ENCODE measurements at regions of chr12 and their contacts with region 1.

Region 1: GRCh38 chr12:65209655-65210043 is 40.3 kb downstream of the LEMD3 start:
- DNase-seq: no peak
- H3K4me3 Mint-ChIP-seq: peak overlapping the region; percentile 70
- H3K27ac Mint-ChIP-seq: peak overlapping the region; percentile 90
- H3K4me1 Mint-ChIP-seq: peaks cover 62% of the 10 kb centered on the region
- H3K27me3 Mint-ChIP-seq: no peaks in the 10 kb centered on the region

Region 2: GRCh38 chr12:65189028-65189718 is 20.5 kb before region 1 on chr12:
- intact Hi-C with region 1: loop called (anchors 2 kb)
- DNase-seq: no peak
- H3K4me3 Mint-ChIP-seq: no peak overlapping the region
- H3K27ac Mint-ChIP-seq: no peak overlapping the region
- H3K4me1 Mint-ChIP-seq: peaks cover 71% of the 10 kb centered on the region
- H3K27me3 Mint-ChIP-seq: no peaks in the 10 kb centered on the region

Region 3: GRCh38 chr12:65195387-65196055 is 14.1 kb before region 1 on chr12:
- intact Hi-C with region 1: loop called (anchors 2 kb)
- DNase-seq: no peak
- H3K4me3 Mint-ChIP-seq: no peak overlapping the region
- H3K27ac Mint-ChIP-seq: peak overlapping the region; percentile 29
- H3K4me1 Mint-ChIP-seq: peaks cover 66% of the 10 kb centered on the region
- H3K27me3 Mint-ChIP-seq: no peaks in the 10 kb centered on the region